ENCODE measurements at regions of chr13 and their contacts with region 1.

Region 1: GRCh38 chr13:100235311-100235901 is 146.5 kb downstream of the PCCA start:
- DNase-seq: peak; percentile 23 to 46
- ATAC-seq: peak in 1 of 2 experiments; percentile 52; a peak in 2 of 6 replicates
- H3K4me3 ChIP-seq: no peak overlapping the region
- H3K27ac ChIP-seq: peak overlapping the region in 1 of 2 experiments; percentile 80; a peak in 4 of 6 replicates
- H3K4me1 ChIP-seq: peaks cover 32% of the 10 kb centered on the region
- CTCF ChIP-seq: peak; percentile 64
- EP300 ChIP-seq: no peak
- POLR2A ChIP-seq: no peak
- RAD21 ChIP-seq: peak; percentile 79 to 81

Region 2: DNA sequence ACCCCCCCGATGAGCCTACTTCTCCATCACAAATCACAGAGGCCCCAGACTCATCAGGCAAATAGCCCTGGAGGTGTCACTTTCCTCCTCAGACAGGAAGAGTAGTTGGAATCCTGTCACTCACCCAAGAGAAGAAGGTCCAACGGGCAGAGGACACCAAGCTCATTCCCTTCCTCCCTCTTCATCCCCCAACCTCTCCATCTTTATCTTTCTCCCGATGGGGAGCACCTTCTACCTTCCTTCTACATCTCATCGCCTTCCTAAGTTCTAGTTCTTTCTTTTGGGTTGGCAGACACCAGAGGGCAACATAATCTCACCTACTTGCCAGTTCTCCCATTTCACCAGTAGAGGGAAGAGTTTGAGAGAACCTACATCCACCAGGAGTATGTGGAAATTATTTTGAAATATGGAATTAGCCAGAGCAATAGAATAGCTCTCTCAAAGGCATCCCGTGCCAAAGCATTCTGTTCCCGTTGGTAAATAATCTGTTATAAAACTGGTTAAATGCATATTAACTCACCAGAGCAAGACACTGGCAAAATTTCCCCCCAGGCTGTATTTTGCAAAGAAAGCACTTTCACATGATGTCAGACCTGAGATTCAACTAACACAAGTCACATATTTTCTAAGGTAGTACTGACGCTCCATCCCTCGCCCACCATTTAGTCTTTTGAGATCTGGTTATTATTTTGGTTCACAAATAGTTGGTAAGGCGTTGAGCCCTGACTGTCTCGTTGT is 318.9 kb before region 1 on chr13:
- CTCF ChIA-PET with region 1: interaction called, 26 read pairs
- POLR2A ChIA-PET with region 1: no interaction called
- DNase-seq: peak; percentile 71 to 82
- ATAC-seq: peak; percentile 93 to 97
- H3K4me3 ChIP-seq: no peak overlapping the region
- H3K27ac ChIP-seq: no peak overlapping the region
- H3K4me1 ChIP-seq: no peaks in the 10 kb centered on the region
- CTCF ChIP-seq: peak; percentile 94
- EP300 ChIP-seq: no peak
- POLR2A ChIP-seq: no peak
- RAD21 ChIP-seq: peak; percentile 78 to 86

Region 3: DNA sequence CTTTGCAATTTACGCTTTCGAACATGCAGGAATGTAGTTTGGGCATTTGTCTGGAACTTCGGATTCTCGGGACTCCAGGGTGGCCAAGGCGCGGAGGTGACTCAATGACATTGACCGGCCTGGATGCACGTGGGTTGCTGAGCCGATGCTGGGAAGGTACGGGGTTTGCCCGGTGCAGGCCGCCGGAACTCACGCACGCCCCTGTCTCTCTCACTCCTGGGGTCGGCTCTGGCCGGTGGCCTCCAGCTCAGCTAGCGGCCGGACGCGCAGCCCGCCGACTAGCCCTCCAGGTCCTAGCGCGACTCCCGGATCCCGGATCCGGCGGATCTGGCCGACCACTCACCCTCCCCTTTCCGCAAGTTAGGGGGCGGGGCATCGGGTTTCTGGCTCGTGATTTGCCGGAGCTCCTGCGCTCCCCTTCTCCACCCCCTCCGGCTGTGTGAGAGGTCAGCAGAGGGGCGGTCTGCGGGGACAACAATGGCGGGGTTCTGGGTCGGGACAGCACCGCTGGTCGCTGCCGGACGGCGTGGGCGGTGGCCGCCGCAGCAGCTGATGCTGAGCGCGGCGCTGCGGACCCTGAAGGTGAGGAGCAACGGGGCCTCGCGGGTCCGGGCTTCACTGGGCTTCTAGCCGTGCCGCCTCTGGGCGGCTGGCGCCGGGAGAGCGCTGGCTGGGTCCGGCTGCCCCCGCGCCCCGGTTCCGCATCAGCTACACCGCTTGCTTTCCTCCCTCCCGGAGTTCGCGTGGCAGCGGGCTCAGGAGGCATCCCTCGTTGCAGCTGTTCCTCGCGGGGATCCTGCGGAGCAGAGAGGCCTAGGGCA is 146.6 kb before region 1 on chr13 and contains the start of gene PCCA:
- CTCF ChIA-PET with region 1: no interaction called
- POLR2A ChIA-PET with region 1: interaction called, 10 read pairs
- DNase-seq: peak; percentile 84 to 92
- ATAC-seq: peak; percentile 97 to 98
- H3K4me3 ChIP-seq: peak within 1 kb of the TSS; percentile 95
- H3K27ac ChIP-seq: peak within 1 kb of the TSS; percentile 74 to 92
- H3K4me1 ChIP-seq: peaks cover 17% of the 10 kb centered on the region; the same call in 2 of the 3 replicates
- CTCF ChIP-seq: no peak
- EP300 ChIP-seq: no peak
- POLR2A ChIP-seq: peak; percentile 74
- RAD21 ChIP-seq: no peak
- polyA plus RNA-seq, gene PCCA: 13.2 and 16.3 TPM in 2 replicates

Region 4: DNA sequence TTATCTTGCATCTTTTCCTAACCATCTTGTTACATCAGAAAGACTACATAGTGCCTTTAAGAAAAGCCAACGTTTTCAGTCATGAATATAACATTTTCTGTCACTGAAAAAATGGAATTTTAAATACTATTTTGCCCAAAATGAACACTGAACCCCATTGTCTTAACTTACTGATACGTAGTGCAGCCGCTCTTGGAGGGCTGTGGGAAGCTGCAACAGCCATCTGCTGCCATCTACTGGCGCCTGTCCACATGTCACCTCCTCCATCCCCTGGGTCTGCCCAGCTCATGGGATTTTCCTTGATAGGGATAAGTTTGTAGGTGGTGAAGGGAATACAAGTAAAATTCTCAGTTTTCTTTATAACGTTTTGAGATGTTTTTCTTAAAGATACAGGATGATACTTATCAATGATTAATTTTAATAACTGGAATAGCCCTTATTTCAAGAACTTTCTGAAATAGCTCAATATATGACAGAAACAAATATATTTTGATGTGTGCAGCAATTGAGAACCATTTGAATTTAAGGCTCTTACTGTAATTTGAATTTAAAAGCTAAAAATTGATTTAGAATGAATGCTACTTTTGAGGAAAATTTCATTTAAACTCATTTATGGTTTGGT is 279.5 kb after region 1 on chr13:
- CTCF ChIA-PET with region 1: interaction called, 13 read pairs
- POLR2A ChIA-PET with region 1: no interaction called
- DNase-seq: peak; percentile 67 to 89
- ATAC-seq: peak; percentile 97 to 98
- H3K4me3 ChIP-seq: no peak overlapping the region
- H3K27ac ChIP-seq: peak overlapping the region; percentile 35 to 56; a peak in 4 of 6 replicates
- H3K4me1 ChIP-seq: peaks cover 43% of the 10 kb centered on the region
- CTCF ChIP-seq: peak; percentile 84
- EP300 ChIP-seq: no peak
- POLR2A ChIP-seq: no peak
- RAD21 ChIP-seq: peak; percentile 93 to 95

Measured in A549 (cell line).